Caco-2 (cell line): ENCODE measurements at regions of chr18 and their contacts with region 1.

Region 1: GRCh38 chr18:44799907-44800421 is 119.3 kb downstream of the SETBP1 start:
- DNase-seq: no peak
- H3K4me3 ChIP-seq: no peak overlapping the region
- H3K4me3 Mint-ChIP-seq: no peak overlapping the region
- H3K27ac Mint-ChIP-seq: no peak overlapping the region
- H3K4me1 ChIP-seq: peaks cover 66% of the 10 kb centered on the region
- H3K4me1 Mint-ChIP-seq: peaks cover 39% of the 10 kb centered on the region
- H3K27me3 ChIP-seq: no peaks in the 10 kb centered on the region
- H3K27me3 Mint-ChIP-seq: no peaks in the 10 kb centered on the region
- CTCF ChIP-seq: no peak

Region 2: GRCh38 chr18:44537521-44537920 is 262.4 kb before region 1 on chr18:
- CTCF ChIA-PET with region 1: no interaction called
- POLR2A ChIA-PET with region 1: no interaction called
- intact Hi-C with region 1: no loop called
- DNase-seq: no peak
- H3K4me3 ChIP-seq: no peak overlapping the region
- H3K4me3 Mint-ChIP-seq: no peak overlapping the region
- H3K27ac Mint-ChIP-seq: no peak overlapping the region
- H3K4me1 ChIP-seq: no peaks in the 10 kb centered on the region
- H3K4me1 Mint-ChIP-seq: no peaks in the 10 kb centered on the region
- H3K27me3 ChIP-seq: no peaks in the 10 kb centered on the region
- H3K27me3 Mint-ChIP-seq: peaks cover 10% of the 10 kb centered on the region
- CTCF ChIP-seq: no peak

Region 3: DNA sequence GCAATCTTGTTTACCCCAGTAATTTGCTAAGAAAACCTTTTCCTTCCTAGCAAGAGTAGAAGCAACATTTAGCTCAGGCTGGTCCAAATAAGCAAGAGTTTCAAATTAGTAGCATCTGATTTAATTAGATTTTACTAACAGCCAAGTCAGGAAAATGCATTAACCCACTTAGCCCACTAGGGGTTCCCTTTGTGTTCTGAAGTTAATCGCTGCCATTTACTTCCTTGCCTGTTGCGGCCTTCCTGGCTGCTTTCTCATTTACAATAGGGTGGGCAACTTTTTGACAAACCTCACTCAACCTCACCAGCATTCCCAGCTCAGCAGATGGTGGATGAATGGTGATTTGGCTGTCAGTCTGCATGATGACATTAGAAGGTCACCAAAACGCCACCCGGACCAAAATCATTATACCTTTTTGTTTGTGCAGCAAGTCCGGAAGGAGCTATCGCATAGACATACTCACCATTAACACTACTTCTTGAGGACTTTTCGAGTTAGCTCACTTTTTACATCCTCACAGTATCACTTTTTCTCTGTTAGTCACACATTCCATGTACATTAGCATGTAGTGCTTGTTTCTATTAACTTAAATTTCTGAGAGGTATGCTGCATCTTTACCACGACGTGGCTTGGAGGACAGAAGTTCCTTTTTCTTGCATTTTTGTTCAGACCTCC is 220.8 kb before region 1 on chr18:
- CTCF ChIA-PET with region 1: no interaction called
- POLR2A ChIA-PET with region 1: no interaction called
- intact Hi-C with region 1: no loop called
- DNase-seq: peak in 1 of 2 experiments; percentile 1
- H3K4me3 ChIP-seq: no peak overlapping the region
- H3K4me3 Mint-ChIP-seq: no peak overlapping the region
- H3K27ac Mint-ChIP-seq: no peak overlapping the region
- H3K4me1 ChIP-seq: no peaks in the 10 kb centered on the region
- H3K4me1 Mint-ChIP-seq: no peaks in the 10 kb centered on the region
- H3K27me3 ChIP-seq: no peaks in the 10 kb centered on the region
- H3K27me3 Mint-ChIP-seq: no peaks in the 10 kb centered on the region
- CTCF ChIP-seq: peak; percentile 14 to 39

Region 4: GRCh38 chr18:44651453-44651852 is 148.5 kb before region 1 on chr18:
- CTCF ChIA-PET with region 1: no interaction called
- POLR2A ChIA-PET with region 1: no interaction called
- intact Hi-C with region 1: no loop called
- DNase-seq: peak; percentile 36 to 51
- H3K4me3 ChIP-seq: no peak overlapping the region
- H3K4me3 Mint-ChIP-seq: no peak overlapping the region
- H3K27ac Mint-ChIP-seq: no peak overlapping the region
- H3K4me1 ChIP-seq: peaks cover 15% of the 10 kb centered on the region
- H3K4me1 Mint-ChIP-seq: no peaks in the 10 kb centered on the region
- H3K27me3 ChIP-seq: no peaks in the 10 kb centered on the region
- H3K27me3 Mint-ChIP-seq: no peaks in the 10 kb centered on the region
- CTCF ChIP-seq: no peak

Region 5: GRCh38 chr18:45142868-45143267 is 342.9 kb after region 1 on chr18:
- CTCF ChIA-PET with region 1: no interaction called
- POLR2A ChIA-PET with region 1: no interaction called
- intact Hi-C with region 1: no loop called
- DNase-seq: no peak
- H3K4me3 ChIP-seq: no peak overlapping the region
- H3K4me3 Mint-ChIP-seq: no peak overlapping the region
- H3K27ac Mint-ChIP-seq: no peak overlapping the region
- H3K4me1 ChIP-seq: no peaks in the 10 kb centered on the region
- H3K4me1 Mint-ChIP-seq: no peaks in the 10 kb centered on the region
- H3K27me3 ChIP-seq: no peaks in the 10 kb centered on the region
- H3K27me3 Mint-ChIP-seq: peaks cover 2% of the 10 kb centered on the region
- CTCF ChIP-seq: no peak

Region 6: GRCh38 chr18:45355944-45356520 is 556.1 kb after region 1 on chr18:
- CTCF ChIA-PET with region 1: no interaction called
- POLR2A ChIA-PET with region 1: no interaction called
- intact Hi-C with region 1: loop called (anchors 10 kb)
- DNase-seq: no peak
- H3K4me3 ChIP-seq: no peak overlapping the region
- H3K4me3 Mint-ChIP-seq: no peak overlapping the region
- H3K27ac Mint-ChIP-seq: no peak overlapping the region
- H3K4me1 ChIP-seq: peaks cover 26% of the 10 kb centered on the region
- H3K4me1 Mint-ChIP-seq: peaks cover 35% of the 10 kb centered on the region
- H3K27me3 ChIP-seq: no peaks in the 10 kb centered on the region
- H3K27me3 Mint-ChIP-seq: no peaks in the 10 kb centered on the region
- CTCF ChIP-seq: no peak